SK-N-SH (cell line): ENCODE measurements at regions of chr1 and their contacts with region 1.

Region 1: DNA sequence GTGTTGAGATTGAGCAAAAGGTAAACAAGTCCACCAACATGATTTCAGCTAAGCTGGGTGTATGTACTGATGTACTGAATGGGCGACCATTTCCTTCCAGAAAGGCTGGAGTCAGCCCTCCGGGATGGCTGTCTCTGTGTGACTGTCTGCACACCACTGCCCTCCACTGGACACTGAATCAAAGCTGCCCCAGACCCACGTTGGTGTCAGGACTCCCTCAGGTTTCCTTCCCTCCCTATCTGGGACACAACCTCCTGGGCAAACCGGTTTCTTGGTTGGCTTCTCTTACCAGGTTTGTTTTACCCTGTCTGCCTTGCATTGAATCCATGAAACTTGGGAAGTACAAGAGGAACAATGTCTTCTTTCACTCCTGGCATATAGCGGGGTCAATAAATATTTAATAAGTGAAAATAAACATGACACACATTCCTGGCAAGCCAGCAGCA is 5.3 kb upstream of the SRP9 start:
- DNase-seq: peak; percentile 79
- H3K4me3 ChIP-seq: peak overlapping the region in 1 of 2 experiments; percentile 39; a peak in 1 of 4 replicates
- H3K27ac ChIP-seq: peak overlapping the region; percentile 56 to 78
- H3K4me1 ChIP-seq: peaks cover 24 to 48% of the 10 kb centered on the region in 2 experiments
- H3K27me3 ChIP-seq: no peaks in the 10 kb centered on the region
- CTCF ChIP-seq: peak; percentile 95
- EP300 ChIP-seq: no peak
- RAD21 ChIP-seq: peak; percentile 99

Region 2: GRCh38 chr1:225280563-225280962 is 491.8 kb before region 1 on chr1:
- CTCF ChIA-PET with region 1: no interaction called
- POLR2A ChIA-PET with region 1: no interaction called
- DNase-seq: no peak
- H3K4me3 ChIP-seq: no peak overlapping the region
- H3K27ac ChIP-seq: no peak overlapping the region
- H3K4me1 ChIP-seq: no peaks in the 10 kb centered on the region
- H3K27me3 ChIP-seq: no peaks in the 10 kb centered on the region
- CTCF ChIP-seq: no peak
- EP300 ChIP-seq: no peak
- RAD21 ChIP-seq: no peak

Region 3: DNA sequence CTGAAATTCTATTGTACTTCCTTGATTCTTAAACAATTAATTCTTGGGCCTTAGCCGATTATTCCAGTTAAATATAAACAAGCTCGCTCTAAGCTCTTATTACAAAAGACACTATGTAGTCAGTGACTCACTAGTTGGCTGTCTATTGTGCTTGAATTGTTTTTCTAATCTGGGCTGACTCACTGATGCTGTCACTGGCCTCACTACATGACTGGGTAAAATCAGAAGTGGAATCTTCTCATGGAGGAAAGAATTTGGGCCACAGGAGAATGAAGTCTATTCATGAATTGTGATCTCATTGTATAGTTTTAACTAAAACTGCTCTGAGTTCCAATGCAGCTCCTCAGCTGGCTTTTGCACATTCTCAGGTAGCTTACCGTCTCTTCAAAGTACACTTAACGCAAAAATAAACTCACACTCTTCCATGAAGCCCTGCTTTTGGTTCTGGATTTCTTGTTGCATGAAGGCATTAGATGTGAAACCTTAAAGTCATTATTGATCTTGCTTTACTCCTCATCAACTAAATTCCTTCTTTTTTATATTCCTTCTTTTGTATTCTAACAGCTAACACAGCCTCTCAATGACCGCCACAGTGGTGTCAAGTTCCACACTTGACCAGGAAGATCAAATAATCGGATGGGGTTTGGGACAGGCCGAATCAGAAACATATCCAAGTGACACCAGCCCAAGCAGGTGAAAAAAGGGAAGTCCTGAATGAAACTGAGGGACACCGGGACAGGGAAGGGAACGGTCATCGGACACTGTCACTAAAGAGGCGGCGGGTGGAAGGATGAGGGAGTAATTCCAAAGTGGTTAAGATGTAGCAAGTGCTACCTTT is 263.6 kb before region 1 on chr1:
- CTCF ChIA-PET with region 1: interaction called, 11 read pairs
- POLR2A ChIA-PET with region 1: no interaction called
- DNase-seq: no peak
- H3K4me3 ChIP-seq: no peak overlapping the region
- H3K27ac ChIP-seq: peak overlapping the region; percentile 64 to 96
- H3K4me1 ChIP-seq: peaks cover 5 to 19% of the 10 kb centered on the region in 2 experiments; a peak in 3 of 4 replicates
- H3K27me3 ChIP-seq: no peaks in the 10 kb centered on the region
- CTCF ChIP-seq: no peak
- EP300 ChIP-seq: peak in 1 of 2 experiments; percentile 77; a peak in 3 of 4 replicates
- RAD21 ChIP-seq: no peak

Region 4: DNA sequence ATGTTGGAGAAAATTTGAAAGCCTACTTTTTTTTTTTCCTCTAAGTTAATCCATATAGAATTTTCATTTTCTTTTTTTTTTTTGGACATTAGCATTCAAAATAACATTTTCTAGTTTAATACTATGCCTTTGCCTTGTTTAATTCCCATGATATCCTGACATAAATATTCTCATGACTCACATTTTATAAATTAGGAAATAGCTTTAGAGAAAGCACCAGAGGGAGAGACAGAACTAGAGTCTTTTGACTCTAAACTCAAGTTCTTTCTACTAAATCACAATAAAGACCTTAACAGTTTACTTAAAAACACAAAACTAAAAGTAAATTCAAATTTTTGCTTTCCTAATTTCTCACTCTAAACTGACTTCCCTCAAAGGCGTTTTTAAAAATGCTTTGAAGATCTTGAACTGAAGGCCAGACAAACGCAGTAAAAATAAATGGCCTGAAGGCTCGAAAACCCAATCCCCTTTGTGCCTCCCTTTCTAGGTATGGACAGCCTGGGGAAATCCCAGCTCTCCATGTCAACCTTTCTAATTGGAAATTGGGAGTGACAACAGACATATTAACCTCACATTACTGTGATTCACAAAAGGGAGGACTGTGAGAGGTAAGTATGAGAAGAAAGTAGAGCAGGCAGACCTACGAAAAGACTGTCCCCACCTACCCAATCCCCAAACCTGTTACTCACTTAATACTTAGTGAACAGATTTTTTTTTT is 224.0 kb before region 1 on chr1:
- CTCF ChIA-PET with region 1: interaction called, 95 read pairs
- POLR2A ChIA-PET with region 1: no interaction called
- DNase-seq: no peak
- H3K4me3 ChIP-seq: no peak overlapping the region
- H3K27ac ChIP-seq: peak overlapping the region; percentile 40 to 76; a peak in 3 of 4 replicates
- H3K4me1 ChIP-seq: peaks cover 9 to 17% of the 10 kb centered on the region in 2 experiments; a peak in 3 of 4 replicates
- H3K27me3 ChIP-seq: no peaks in the 10 kb centered on the region
- CTCF ChIP-seq: no peak
- EP300 ChIP-seq: no peak
- RAD21 ChIP-seq: no peak

Region 5: GRCh38 chr1:225652729-225653462 is 119.5 kb before region 1 on chr1 and contains the start of gene ENAH:
- CTCF ChIA-PET with region 1: interaction called, 29 read pairs
- POLR2A ChIA-PET with region 1: interaction called, 15 read pairs
- DNase-seq: peak; percentile 96
- H3K4me3 ChIP-seq: peak within 1 kb of the TSS; percentile 96 to 98
- H3K27ac ChIP-seq: peak within 1 kb of the TSS; percentile 95 to 99
- H3K4me1 ChIP-seq: peaks cover 18 to 41% of the 10 kb centered on the region in 2 experiments
- H3K27me3 ChIP-seq: no peaks in the 10 kb centered on the region
- CTCF ChIP-seq: no peak
- EP300 ChIP-seq: no peak
- RAD21 ChIP-seq: no peak
- polyA plus RNA-seq, gene ENAH: 48.9 and 72.0 TPM in 2 replicates

Region 6: DNA sequence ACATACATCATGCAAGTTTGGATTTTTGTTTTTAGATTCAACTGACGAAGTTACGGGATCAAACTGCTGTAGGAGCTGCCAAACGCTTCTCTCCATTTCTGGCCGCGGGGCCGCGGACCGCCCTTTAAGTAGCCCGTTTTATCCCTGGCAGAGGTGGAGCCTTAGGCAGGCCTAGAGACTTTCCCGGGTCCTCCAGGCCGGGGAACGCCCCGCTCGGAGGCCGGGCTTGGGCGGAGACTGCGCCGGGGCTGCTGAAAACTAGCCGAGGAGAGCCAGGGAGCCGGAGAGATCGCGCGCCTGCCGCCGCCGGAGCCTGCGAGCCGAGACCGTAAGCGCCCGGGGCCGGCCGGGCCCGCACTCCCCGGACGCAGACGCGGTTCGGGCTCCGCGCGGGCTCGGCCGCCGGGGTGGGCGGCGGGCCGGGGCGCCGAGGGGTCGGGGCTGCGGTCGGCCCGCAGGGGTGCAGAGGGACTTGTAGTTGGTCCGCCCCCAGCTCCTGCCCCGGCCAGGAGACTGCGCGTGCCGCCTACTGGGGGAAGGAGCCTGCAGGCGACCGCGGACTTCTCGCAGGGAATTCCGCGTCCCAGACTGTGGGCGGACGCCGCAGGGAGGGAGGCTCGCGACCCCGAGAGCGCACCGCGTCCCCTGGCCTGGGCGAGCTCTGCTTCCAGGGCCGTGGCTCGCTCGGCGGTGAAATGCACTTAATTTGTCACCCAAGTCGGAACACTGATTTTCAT is 37.7 kb after region 1 on chr1 and contains the start of gene EPHX1:
- CTCF ChIA-PET with region 1: interaction called, 13 read pairs
- POLR2A ChIA-PET with region 1: interaction called, 5 read pairs
- DNase-seq: peak; percentile 95
- H3K4me3 ChIP-seq: peak within 1 kb of the TSS; percentile 68 to 97
- H3K27ac ChIP-seq: peak within 1 kb of the TSS; percentile 46 to 79
- H3K4me1 ChIP-seq: peaks cover 5 to 23% of the 10 kb centered on the region in 2 experiments; a peak in 3 of 4 replicates
- H3K27me3 ChIP-seq: no peaks in the 10 kb centered on the region
- CTCF ChIP-seq: peak; percentile 41; the same call in 1 of the 2 replicates
- EP300 ChIP-seq: no peak
- RAD21 ChIP-seq: peak; percentile 2; the same call in 1 of the 2 replicates
- polyA plus RNA-seq, gene EPHX1: 22.6 and 45.7 TPM in 2 replicates